Endothelial cell of umbilical vein (primary cell): ENCODE measurements at regions of chr9 and their contacts with region 1.

Region 1: GRCh38 chr9:72843520-72844439 is 109.1 kb downstream of the ALDH1A1 start:
- DNase-seq: no peak
- H3K4me3 ChIP-seq: no peak overlapping the region
- H3K27ac ChIP-seq: no peak overlapping the region
- H3K4me1 ChIP-seq: no peaks in the 10 kb centered on the region
- H3K27me3 ChIP-seq: no peaks in the 10 kb centered on the region
- CTCF ChIP-seq: peak in 1 of 2 donors; percentile 9
- POLR2A ChIP-seq: no peak

Region 2: DNA sequence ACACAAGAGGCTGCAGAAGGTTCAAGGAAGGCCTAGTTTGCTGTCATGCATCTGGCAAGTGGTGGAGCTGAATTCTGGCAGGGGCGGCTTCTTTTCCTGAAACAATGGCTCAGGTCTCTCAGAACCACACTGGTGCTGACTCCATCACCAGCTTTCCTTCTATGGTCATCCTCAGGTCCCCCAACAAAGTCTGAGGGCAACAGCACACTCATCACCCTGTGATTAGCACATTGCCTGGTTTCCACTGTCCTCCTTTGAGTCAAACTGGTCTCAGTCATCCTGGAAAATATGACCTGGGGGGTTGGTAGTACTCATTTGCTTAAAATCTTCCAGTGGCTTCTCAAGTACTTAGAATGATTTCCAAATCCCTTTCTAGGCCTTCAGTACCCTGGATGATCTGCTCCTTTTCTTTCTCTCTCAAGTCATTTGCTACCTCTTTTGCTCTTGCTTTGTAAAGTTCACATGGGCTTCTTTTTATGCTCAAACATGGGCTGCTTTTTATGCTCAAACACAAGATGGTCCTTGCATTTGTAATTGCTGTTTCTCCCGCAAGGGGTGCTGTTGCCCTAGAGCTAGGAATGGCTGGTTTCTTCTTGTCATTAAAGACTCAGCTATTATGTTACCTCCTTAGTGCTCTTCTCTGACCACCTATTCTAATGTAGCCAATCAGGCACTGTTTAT is 35.9 kb before region 1 on chr9:
- CTCF ChIA-PET with region 1: no interaction called
- POLR2A ChIA-PET with region 1: no interaction called
- dilution Hi-C with region 1: no loop called
- intact Hi-C with region 1: no loop called
- DNase-seq: peak; percentile 13
- H3K4me3 ChIP-seq: no peak overlapping the region
- H3K27ac ChIP-seq: no peak overlapping the region
- H3K4me1 ChIP-seq: no peaks in the 10 kb centered on the region
- H3K27me3 ChIP-seq: peaks cover 0 to 1% of the 10 kb centered on the region in 2 experiments
- CTCF ChIP-seq: peak; percentile 17 to 23
- POLR2A ChIP-seq: no peak

Region 3: DNA sequence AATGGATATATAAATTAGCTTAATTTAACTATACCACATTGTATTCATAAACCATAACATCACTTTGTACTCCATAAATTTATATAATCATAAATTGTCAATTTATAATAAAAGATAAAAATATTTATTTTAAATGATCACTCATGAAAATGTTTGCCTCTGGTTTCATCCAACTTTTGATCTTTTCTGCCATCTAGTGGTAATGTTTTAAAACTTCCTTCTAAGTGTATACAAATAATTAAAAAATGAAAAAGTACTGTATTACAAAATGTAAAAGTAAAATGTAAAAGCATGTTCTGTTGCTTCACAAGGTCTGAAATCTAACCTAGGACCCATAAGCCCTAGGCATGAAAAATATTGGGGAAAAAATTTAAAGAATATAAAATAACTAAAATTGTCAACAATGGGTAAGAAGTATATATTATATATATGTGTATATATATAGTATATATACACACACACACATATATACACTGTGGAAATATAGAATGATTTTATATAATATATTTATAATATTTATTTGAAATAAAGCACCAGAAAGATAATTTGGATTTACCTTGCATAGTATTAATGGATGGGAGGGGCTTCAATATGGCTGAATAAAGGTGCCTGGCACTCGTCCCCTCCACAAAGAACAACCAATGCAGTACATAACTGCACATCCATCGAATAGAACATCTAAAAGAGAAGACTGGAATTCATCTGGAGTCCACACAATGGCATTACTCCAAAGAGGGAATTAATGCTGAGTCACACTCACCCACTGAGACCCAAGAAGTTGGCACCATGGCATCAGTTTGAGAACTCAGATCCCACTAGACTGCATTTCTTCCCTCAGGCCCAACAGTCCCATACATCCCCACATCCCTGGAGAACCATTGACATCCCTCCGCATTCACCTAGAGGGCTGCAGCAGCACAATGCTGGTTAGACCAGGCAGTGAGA is 340.4 kb after region 1 on chr9:
- CTCF ChIA-PET with region 1: no interaction called
- POLR2A ChIA-PET with region 1: no interaction called
- dilution Hi-C with region 1: no loop called
- intact Hi-C with region 1: loop called (anchors 1 kb)
- DNase-seq: peak; percentile 47
- H3K4me3 ChIP-seq: no peak overlapping the region
- H3K27ac ChIP-seq: no peak overlapping the region
- H3K4me1 ChIP-seq: no peaks in the 10 kb centered on the region
- H3K27me3 ChIP-seq: no peaks in the 10 kb centered on the region
- CTCF ChIP-seq: peak; percentile 9 to 10
- POLR2A ChIP-seq: no peak